ENCODE measurements at regions of chr12 and their contacts with region 1.

Region 1: DNA sequence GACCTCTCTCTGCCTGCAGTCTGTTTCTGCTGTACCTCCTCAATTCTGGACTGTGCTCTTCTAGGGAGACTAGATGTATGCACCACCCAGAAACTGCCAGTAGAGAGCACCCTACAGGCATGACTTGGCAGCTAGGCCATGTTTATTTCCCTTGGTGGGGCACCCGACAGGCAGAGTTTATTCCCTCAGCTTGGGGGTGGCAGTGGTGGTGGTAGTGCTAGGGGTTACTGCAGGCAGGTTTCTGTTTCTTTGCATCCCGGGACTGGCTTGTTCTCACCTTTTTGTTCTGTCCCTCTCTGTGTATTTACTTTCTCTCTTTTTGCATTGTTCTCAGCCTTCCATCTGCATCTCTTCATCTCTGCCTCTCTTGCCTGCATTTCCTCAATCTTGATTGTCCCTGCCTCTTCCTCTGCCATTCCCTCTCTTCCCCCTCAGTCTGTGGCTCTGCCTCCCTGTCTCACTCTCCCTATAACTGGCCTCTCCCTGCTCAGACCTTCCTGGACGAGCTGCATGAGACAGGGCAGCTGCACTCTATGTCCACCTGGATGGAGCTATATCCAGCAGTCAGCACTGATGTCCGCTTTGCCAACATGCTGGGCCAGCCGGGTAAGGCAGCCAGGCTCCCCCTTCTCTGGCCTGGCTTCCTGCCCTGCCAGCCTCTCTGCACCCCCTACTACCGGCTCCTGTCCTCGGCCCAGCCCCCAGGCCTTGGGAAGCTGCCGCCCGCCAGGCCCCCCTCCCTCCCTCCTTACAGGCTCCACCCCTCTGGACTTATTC is 13.8 kb downstream of the PRPF40B start:
- DNase-seq: peak; percentile 65
- ATAC-seq: peak; percentile 90
- H3K4me3 ChIP-seq: no peak overlapping the region
- H3K27ac ChIP-seq: no peak overlapping the region
- H3K4me1 ChIP-seq: peaks cover 2% of the 10 kb centered on the region; the same call in 1 of the 2 replicates
- H3K27me3 ChIP-seq: no peaks in the 10 kb centered on the region
- CTCF ChIP-seq: peak; percentile 74

Region 2: GRCh38 chr12:49623142-49623904 is 13.8 kb before region 1 on chr12 and contains the start of gene PRPF40B:
- CTCF ChIA-PET with region 1: no interaction called
- POLR2A ChIA-PET with region 1: interaction called, 13 read pairs
- intact Hi-C with region 1: no loop called
- DNase-seq: peak; percentile 84
- ATAC-seq: peak; percentile 85
- H3K4me3 ChIP-seq: peak within 1 kb of the TSS; percentile 75
- H3K27ac ChIP-seq: peak within 1 kb of the TSS; percentile 45
- H3K4me1 ChIP-seq: peaks cover 58% of the 10 kb centered on the region
- H3K27me3 ChIP-seq: no peaks in the 10 kb centered on the region
- CTCF ChIP-seq: peak; percentile 33; the same call in 1 of the 2 replicates
- total RNA-seq, gene PRPF40B: 16.2 and 17.7 TPM in 2 replicates

Measured in PC-3 (cell line).